ENCODE measurements at regions of chr1 and their contacts with region 1.

Region 1: GRCh38 chr1:165928075-165928731 is 100.8 kb downstream of the UCK2 start:
- DNase-seq: no peak
- ATAC-seq: no peak

Region 2: GRCh38 chr1:166062421-166063070 is 134.3 kb after region 1 on chr1:
- intact Hi-C with region 1: no loop called
- DNase-seq: no peak
- ATAC-seq: no peak

Region 3: DNA sequence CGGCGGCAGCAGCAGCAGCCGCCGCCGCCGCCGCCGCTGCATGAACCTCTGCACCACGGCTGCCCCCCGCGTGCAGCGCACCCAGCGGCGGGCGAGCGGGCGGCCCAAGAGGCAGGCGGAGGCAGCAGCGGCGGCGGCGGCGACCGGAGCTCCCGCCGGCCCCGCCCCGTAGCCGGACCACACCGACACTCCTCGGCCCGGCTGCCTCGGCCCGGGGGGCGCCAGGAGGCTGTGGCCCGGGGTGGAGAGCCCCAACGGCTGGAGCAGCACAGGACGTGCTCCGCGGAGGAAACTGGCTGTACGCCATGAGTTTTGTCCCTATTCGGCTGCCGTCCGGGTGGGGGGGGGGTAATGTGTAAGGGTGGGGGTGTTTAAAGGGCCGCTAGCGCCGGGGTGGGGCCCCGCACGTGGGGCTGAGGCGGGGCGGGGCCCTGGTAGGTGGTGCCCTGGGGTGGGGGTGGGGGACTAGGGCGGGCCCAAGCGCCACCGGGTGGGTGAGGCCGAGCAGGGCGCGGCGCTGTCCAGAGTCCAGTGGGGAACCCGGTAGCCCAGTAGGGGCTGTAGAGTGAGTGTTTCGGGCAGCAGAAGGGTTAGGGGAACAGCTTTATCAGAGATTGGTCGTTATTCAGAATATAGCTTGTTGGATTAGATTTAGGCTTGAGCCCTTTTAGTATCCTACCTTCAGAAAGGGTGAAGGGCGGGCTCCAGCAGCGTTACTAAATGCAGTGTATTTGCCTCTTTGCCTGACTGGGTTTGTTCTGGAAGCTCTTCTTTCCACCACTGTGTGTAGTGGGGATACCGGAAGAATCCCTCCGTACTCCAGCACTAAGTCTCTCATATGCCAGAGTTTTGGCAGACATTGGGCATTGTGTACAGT is 238.7 kb after region 1 on chr1 and contains the start of gene FAM78B:
- intact Hi-C with region 1: loop called (anchors 5 kb)
- DNase-seq: peak; percentile 84
- ATAC-seq: peak; percentile 94
- total RNA-seq, gene FAM78B: 4.2 TPM

Region 4: GRCh38 chr1:166270476-166271150 is 342.4 kb after region 1 on chr1:
- intact Hi-C with region 1: no loop called
- DNase-seq: no peak
- ATAC-seq: no peak

Region 5: GRCh38 chr1:166432655-166433054 is 504.5 kb after region 1 on chr1:
- intact Hi-C with region 1: loop called (anchors 2 kb)
- DNase-seq: no peak
- ATAC-seq: no peak

Region 6: GRCh38 chr1:166479052-166479631 is 550.9 kb after region 1 on chr1:
- intact Hi-C with region 1: loop called (anchors 5 kb)
- DNase-seq: peak; percentile 45
- ATAC-seq: peak; percentile 48